Mammary epithelial cell (primary cell): ENCODE measurements at regions of chr11 and their contacts with region 1.

Region 1: GRCh38 chr11:77776455-77776854 is 44.1 kb downstream of the RSF1 start:
- DNase-seq: no peak
- H3K4me3 ChIP-seq: no peak overlapping the region
- H3K27ac ChIP-seq: no peak overlapping the region
- H3K4me1 ChIP-seq: no peaks in the 10 kb centered on the region
- H3K27me3 ChIP-seq: no peaks in the 10 kb centered on the region
- CTCF ChIP-seq: peak; percentile 28 to 44

Region 2: GRCh38 chr11:77854838-77855237 is 78.4 kb after region 1 on chr11:
- CTCF ChIA-PET with region 1: no interaction called
- dilution Hi-C with region 1: no loop called
- in situ Hi-C with region 1: no loop called
- intact Hi-C with region 1: no loop called
- DNase-seq: no peak
- H3K4me3 ChIP-seq: no peak overlapping the region
- H3K27ac ChIP-seq: no peak overlapping the region
- H3K4me1 ChIP-seq: no peaks in the 10 kb centered on the region
- H3K27me3 ChIP-seq: no peaks in the 10 kb centered on the region
- CTCF ChIP-seq: no peak

Region 3: GRCh38 chr11:77994412-77995362 is 218.2 kb after region 1 on chr11 and contains the start of gene INTS4:
- CTCF ChIA-PET with region 1: no interaction called
- dilution Hi-C with region 1: no loop called
- in situ Hi-C with region 1: loop called in 1 of 2 experiments (anchors 10 kb)
- intact Hi-C with region 1: no loop called
- DNase-seq: peak; percentile 100
- H3K4me3 ChIP-seq: peak within 1 kb of the TSS; percentile 66 to 87 (median 85)
- H3K27ac ChIP-seq: peak within 1 kb of the TSS; percentile 46
- H3K4me1 ChIP-seq: peaks cover 14% of the 10 kb centered on the region
- H3K27me3 ChIP-seq: no peaks in the 10 kb centered on the region
- CTCF ChIP-seq: no peak
- total RNA-seq, gene INTS4: 25.0 to 28.0 TPM

Region 4: GRCh38 chr11:78000193-78000592 is 223.7 kb after region 1 on chr11:
- CTCF ChIA-PET with region 1: interaction called, 9 read pairs
- dilution Hi-C with region 1: no loop called
- in situ Hi-C with region 1: loop called (anchors 10 kb)
- intact Hi-C with region 1: loop called (anchors 1 kb)
- DNase-seq: peak; percentile 48
- H3K4me3 ChIP-seq: no peak overlapping the region
- H3K27ac ChIP-seq: no peak overlapping the region
- H3K4me1 ChIP-seq: peaks cover 1% of the 10 kb centered on the region
- H3K27me3 ChIP-seq: no peaks in the 10 kb centered on the region
- CTCF ChIP-seq: peak; percentile 68 to 76

Region 5: DNA sequence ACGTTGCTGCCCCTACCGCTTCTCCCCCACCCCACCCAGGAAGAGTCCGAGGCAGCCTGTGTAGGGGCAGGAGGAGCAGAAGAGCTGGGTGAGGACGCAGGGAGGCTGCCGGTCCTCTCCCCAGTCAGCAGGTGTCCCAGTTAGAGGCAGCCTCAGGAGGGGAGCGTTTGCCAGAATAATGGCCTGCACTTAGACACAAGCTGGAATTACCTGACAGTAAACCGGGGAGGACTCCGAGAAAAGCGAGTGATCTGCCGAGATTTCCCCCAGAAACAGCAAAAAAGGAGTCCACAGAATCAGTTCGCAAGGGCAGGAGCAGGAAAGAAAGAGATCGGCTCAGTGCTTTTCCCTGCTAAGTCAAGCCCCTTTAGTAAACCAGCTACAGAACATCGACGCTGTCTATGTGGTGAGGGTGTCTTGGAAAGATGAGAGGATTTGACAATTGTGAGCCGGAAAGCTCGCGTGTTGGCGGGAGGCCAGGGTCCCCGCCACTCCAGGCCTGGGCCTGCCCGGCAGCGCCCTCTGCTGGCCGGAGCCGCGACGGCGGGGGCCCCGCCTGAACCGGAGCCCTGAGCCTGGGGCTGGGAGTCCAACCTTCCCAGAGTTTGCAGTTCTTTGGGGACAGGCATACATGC is 269.5 kb after region 1 on chr11:
- CTCF ChIA-PET with region 1: interaction called, 4 read pairs
- dilution Hi-C with region 1: no loop called
- in situ Hi-C with region 1: no loop called
- intact Hi-C with region 1: loop called (anchors 2 kb)
- DNase-seq: peak; percentile 52
- H3K4me3 ChIP-seq: peak overlapping the region; percentile 14 to 44 (median 36)
- H3K27ac ChIP-seq: no peak overlapping the region
- H3K4me1 ChIP-seq: peaks cover 13% of the 10 kb centered on the region
- H3K27me3 ChIP-seq: no peaks in the 10 kb centered on the region
- CTCF ChIP-seq: peak; percentile 89 to 100

Region 6: GRCh38 chr11:78061088-78061921 is 284.9 kb after region 1 on chr11:
- CTCF ChIA-PET with region 1: no interaction called
- dilution Hi-C with region 1: loop called (anchors 10 kb)
- in situ Hi-C with region 1: no loop called
- intact Hi-C with region 1: no loop called
- DNase-seq: no peak
- H3K4me3 ChIP-seq: no peak overlapping the region
- H3K27ac ChIP-seq: no peak overlapping the region
- H3K4me1 ChIP-seq: no peaks in the 10 kb centered on the region
- H3K27me3 ChIP-seq: no peaks in the 10 kb centered on the region
- CTCF ChIP-seq: no peak